PC-9 (cell line): ENCODE measurements at regions of chr3 and their contacts with region 1.

Region 1: GRCh38 chr3:120742198-120742849 is at the starts of genes GTF2E1 and RABL3:
- DNase-seq: peak; percentile 97 to 99
- H3K4me3 ChIP-seq: peak within 1 kb of the TSS; percentile 98
- H3K27ac ChIP-seq: peak within 1 kb of the TSS; percentile 90
- H3K4me1 ChIP-seq: peaks cover 14% of the 10 kb centered on the region
- H3K27me3 ChIP-seq: no peaks in the 10 kb centered on the region
- CTCF ChIP-seq: no peak
- total RNA-seq, gene GTF2E1: 22.2 and 23.3 TPM in 2 replicates
- total RNA-seq, gene RABL3: 17.1 and 29.8 TPM in 2 replicates

Region 2: GRCh38 chr3:120596116-120596852 is 146.0 kb before region 1 on chr3 and contains the start of gene NDUFB4:
- CTCF ChIA-PET with region 1: no interaction called
- POLR2A ChIA-PET with region 1: no interaction called
- intact Hi-C with region 1: loop called (anchors 2 kb)
- DNase-seq: peak; percentile 95 to 97
- H3K4me3 ChIP-seq: peak within 1 kb of the TSS; percentile 100
- H3K27ac ChIP-seq: peak within 1 kb of the TSS; percentile 73
- H3K4me1 ChIP-seq: peaks cover 6% of the 10 kb centered on the region; the same call in 1 of the 2 replicates
- H3K27me3 ChIP-seq: no peaks in the 10 kb centered on the region
- CTCF ChIP-seq: no peak
- total RNA-seq, gene NDUFB4: 152 and 217 TPM in 2 replicates

Region 3: GRCh38 chr3:120795017-120795648 is 52.8 kb after region 1 on chr3:
- CTCF ChIA-PET with region 1: no interaction called
- POLR2A ChIA-PET with region 1: no interaction called
- intact Hi-C with region 1: no loop called
- DNase-seq: peak in 1 of 2 experiments; percentile 66
- H3K4me3 ChIP-seq: no peak overlapping the region
- H3K27ac ChIP-seq: no peak overlapping the region
- H3K4me1 ChIP-seq: no peaks in the 10 kb centered on the region
- H3K27me3 ChIP-seq: no peaks in the 10 kb centered on the region
- CTCF ChIP-seq: peak; percentile 90